ENCODE measurements at regions of chr1 and their contacts with region 1.

Region 1: DNA sequence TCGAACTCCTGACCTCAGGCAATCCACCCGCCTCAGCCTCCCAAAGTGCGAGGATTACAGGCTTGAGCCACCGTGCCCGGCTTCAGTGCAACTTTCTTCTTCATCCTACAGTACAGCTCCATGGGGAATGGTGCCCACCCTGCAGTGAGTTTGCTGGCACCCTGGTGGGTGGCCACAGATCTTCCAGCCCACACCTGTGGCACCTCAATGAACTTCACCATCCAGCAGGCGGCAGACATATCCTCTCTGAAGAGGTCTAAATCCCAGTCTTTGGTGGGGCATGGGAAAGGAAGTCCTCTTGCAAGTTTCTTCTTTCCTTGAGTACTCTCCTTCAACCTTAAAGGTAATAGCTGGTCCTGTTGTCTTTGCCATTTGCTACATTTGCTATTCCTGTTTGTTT is 18.1 kb upstream of the ZBTB8A start:
- DNase-seq: no peak
- ATAC-seq: peak; percentile 43
- H3K4me3 ChIP-seq: no peak overlapping the region
- H3K27ac ChIP-seq: no peak overlapping the region
- H3K4me1 ChIP-seq: peaks cover 7 to 8% of the 10 kb centered on the region in 2 experiments
- H3K27me3 ChIP-seq: no peaks in the 10 kb centered on the region
- CTCF ChIP-seq: no peak
- POLR2A ChIP-seq: no peak
- RAD21 ChIP-seq: 0 out of 2 replicates have a peak, but pooled peaks have one; percentile 15

Region 2: GRCh38 chr1:32619701-32620485 is 98.7 kb after region 1 on chr1:
- CTCF ChIA-PET with region 1: interaction called, 11 read pairs
- POLR2A ChIA-PET with region 1: no interaction called
- RAD21 ChIA-PET with region 1: no interaction called
- intact Hi-C with region 1: no loop called
- DNase-seq: no peak
- ATAC-seq: no peak
- H3K4me3 ChIP-seq: no peak overlapping the region
- H3K27ac ChIP-seq: no peak overlapping the region
- H3K4me1 ChIP-seq: no peaks in the 10 kb centered on the region
- H3K27me3 ChIP-seq: no peaks in the 10 kb centered on the region
- CTCF ChIP-seq: peak in 2 of 3 experiments; percentile 40 to 44; a peak in 3 of 6 replicates
- POLR2A ChIP-seq: no peak
- RAD21 ChIP-seq: peak; percentile 55

Region 3: DNA sequence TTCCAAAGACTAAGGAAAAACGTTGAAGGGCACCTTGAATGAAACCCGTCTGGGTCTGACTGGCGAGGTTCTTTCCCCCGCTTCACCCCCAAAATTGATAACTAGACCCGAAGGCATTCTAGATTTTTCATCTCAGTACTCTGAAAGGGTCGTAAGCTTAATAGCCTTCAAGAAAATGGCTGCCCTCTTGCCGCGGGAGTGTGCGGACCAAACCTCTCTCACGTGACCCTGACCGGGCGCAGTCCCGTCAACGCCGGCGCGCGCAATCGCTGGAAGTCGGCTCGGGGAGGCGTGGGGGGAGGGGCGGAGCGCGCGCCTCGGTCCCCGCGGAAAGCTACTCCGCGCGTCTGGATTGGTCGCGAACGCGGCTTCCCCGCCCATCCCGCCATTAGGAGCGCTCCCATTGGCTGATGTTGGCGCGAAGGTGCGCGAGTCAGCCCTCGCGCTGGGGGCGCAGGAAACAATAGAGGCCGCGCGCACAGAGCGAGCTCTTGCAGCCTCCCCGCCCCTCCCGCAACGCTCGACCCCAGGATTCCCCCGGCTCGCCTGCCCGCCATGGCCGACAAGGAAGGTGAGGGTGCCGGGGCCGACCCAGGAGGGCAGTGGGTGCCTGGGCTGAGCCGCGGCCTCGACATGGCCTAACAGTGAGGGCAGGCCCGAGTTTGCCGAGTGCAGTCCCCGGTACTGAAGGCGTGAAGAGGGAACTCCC is 129.7 kb after region 1 on chr1 and contains the start of gene RBBP4:
- CTCF ChIA-PET with region 1: interaction called, 6 read pairs
- POLR2A ChIA-PET with region 1: no interaction called
- RAD21 ChIA-PET with region 1: interaction called in 1 of 2 experiments, 3 read pairs
- intact Hi-C with region 1: loop called (anchors 10 kb)
- DNase-seq: peak; percentile 91
- ATAC-seq: peak; percentile 90
- H3K4me3 ChIP-seq: peak within 1 kb of the TSS; percentile 89 to 99
- H3K27ac ChIP-seq: peak within 1 kb of the TSS; percentile 95
- H3K4me1 ChIP-seq: peaks cover 11 to 25% of the 10 kb centered on the region in 2 experiments; a peak in 3 of 4 replicates
- H3K27me3 ChIP-seq: no peaks in the 10 kb centered on the region
- CTCF ChIP-seq: no peak
- POLR2A ChIP-seq: peak; percentile 14
- RAD21 ChIP-seq: no peak
- total RNA-seq, gene RBBP4: 279 TPM

Region 4: DNA sequence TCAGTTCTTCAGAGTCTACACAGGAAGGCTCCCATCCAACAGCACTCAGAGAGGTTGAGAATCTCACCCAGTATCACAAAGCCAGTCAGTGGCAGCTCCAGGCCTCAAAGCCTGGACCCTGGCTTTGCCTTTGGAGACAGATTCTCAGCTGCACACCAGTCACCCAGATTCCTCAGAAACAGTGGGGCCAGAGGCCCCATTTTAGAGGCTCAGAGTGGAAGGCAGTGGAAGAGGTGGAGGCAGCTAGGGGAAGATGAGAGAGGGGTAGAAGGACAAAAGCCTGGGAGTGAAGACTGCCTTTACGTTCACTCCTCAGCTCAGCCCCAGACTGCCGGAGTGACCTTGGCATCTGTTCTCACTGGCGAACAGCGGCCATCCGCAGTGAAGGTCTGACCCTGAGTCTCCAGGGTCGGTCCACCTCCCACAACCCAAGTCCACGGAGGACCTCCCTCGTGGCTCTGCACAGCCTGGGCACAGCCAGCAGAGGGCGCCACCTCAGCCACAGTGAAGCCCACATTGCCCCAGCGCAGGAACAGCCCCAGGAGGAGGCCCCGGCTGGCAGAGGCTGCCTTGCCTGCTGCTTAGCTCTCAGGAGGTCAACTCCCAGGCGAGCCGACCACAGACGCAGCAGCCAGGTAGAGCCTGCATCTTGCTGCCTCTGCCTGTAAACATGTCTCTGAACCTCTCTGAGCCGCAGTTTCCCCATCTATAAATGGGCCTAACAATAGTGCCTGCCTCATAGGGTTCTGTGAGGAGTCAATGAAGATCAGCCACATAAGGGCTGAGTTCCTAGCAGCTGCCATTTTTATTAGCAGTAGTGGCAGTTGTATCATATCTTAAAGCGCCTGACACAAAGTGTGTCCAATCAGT is 355.4 kb after region 1 on chr1:
- CTCF ChIA-PET with region 1: interaction called, 9 read pairs
- POLR2A ChIA-PET with region 1: no interaction called
- RAD21 ChIA-PET with region 1: interaction called in 1 of 2 experiments, 3 read pairs
- intact Hi-C with region 1: loop called (anchors 2 kb)
- DNase-seq: peak; percentile 28
- ATAC-seq: peak; percentile 90
- H3K4me3 ChIP-seq: no peak overlapping the region
- H3K27ac ChIP-seq: no peak overlapping the region
- H3K4me1 ChIP-seq: peaks cover 2 to 16% of the 10 kb centered on the region in 2 experiments; a peak in 3 of 4 replicates
- H3K27me3 ChIP-seq: no peaks in the 10 kb centered on the region
- CTCF ChIP-seq: peak; percentile 86 to 98 (median 97)
- POLR2A ChIP-seq: no peak
- RAD21 ChIP-seq: peak; percentile 82

Measured in HCT116 (cell line).